PC-3 (cell line): ENCODE measurements at regions of chr4 and their contacts with region 1.

Region 1: GRCh38 chr4:72326692-72327632 is 242.1 kb downstream of the ADAMTS3 start:
- DNase-seq: peak; percentile 83
- ATAC-seq: peak; percentile 42; the same call in 1 of the 2 replicates
- H3K4me3 ChIP-seq: no peak overlapping the region
- H3K27ac ChIP-seq: no peak overlapping the region
- H3K4me1 ChIP-seq: peaks cover 18% of the 10 kb centered on the region
- H3K27me3 ChIP-seq: no peaks in the 10 kb centered on the region
- CTCF ChIP-seq: peak; percentile 89

Region 2: DNA sequence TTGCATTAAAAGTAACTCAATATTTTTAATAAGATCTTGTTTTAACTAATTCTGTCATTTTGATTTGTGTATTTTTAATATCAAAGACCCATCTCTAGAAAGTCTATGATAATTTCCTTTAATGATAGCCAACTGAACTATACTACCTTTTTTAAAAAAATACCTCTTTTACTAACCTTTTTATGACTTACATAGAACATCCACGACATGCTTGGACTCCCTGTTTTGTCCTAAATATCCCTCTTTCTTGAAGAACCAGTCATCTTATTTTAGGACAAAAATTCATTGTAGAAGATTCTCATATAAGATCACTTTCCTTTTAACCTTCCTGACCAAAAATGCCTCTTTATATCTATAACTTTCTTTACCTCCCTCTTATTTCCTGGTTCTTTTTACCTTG is 466.3 kb before region 1 on chr4:
- CTCF ChIA-PET with region 1: no interaction called
- POLR2A ChIA-PET with region 1: no interaction called
- intact Hi-C with region 1: no loop called
- DNase-seq: peak; percentile 48
- ATAC-seq: no peak
- H3K4me3 ChIP-seq: no peak overlapping the region
- H3K27ac ChIP-seq: no peak overlapping the region
- H3K4me1 ChIP-seq: no peaks in the 10 kb centered on the region
- H3K27me3 ChIP-seq: no peaks in the 10 kb centered on the region
- CTCF ChIP-seq: no peak

Region 3: GRCh38 chr4:72295966-72296557 is 30.9 kb before region 1 on chr4:
- CTCF ChIA-PET with region 1: interaction called, 3 read pairs
- POLR2A ChIA-PET with region 1: no interaction called
- intact Hi-C with region 1: loop called (anchors 1 kb)
- DNase-seq: peak; percentile 90
- ATAC-seq: peak; percentile 93
- H3K4me3 ChIP-seq: no peak overlapping the region
- H3K27ac ChIP-seq: no peak overlapping the region
- H3K4me1 ChIP-seq: no peaks in the 10 kb centered on the region
- H3K27me3 ChIP-seq: no peaks in the 10 kb centered on the region
- CTCF ChIP-seq: peak; percentile 95

Region 4: GRCh38 chr4:72418458-72418857 is 91.5 kb after region 1 on chr4:
- CTCF ChIA-PET with region 1: no interaction called
- POLR2A ChIA-PET with region 1: no interaction called
- intact Hi-C with region 1: loop called (anchors 2 kb)
- DNase-seq: peak; percentile 90
- ATAC-seq: peak; percentile 92
- H3K4me3 ChIP-seq: no peak overlapping the region
- H3K27ac ChIP-seq: no peak overlapping the region
- H3K4me1 ChIP-seq: peaks cover 9% of the 10 kb centered on the region; the same call in 1 of the 2 replicates
- H3K27me3 ChIP-seq: no peaks in the 10 kb centered on the region
- CTCF ChIP-seq: no peak

Region 5: GRCh38 chr4:72468904-72469502 is 142.0 kb after region 1 on chr4:
- CTCF ChIA-PET with region 1: no interaction called
- POLR2A ChIA-PET with region 1: no interaction called
- intact Hi-C with region 1: loop called (anchors 1 kb)
- DNase-seq: peak; percentile 83
- ATAC-seq: peak; percentile 29; the same call in 1 of the 2 replicates
- H3K4me3 ChIP-seq: no peak overlapping the region
- H3K27ac ChIP-seq: no peak overlapping the region
- H3K4me1 ChIP-seq: no peaks in the 10 kb centered on the region
- H3K27me3 ChIP-seq: no peaks in the 10 kb centered on the region
- CTCF ChIP-seq: peak; percentile 92

Region 6: DNA sequence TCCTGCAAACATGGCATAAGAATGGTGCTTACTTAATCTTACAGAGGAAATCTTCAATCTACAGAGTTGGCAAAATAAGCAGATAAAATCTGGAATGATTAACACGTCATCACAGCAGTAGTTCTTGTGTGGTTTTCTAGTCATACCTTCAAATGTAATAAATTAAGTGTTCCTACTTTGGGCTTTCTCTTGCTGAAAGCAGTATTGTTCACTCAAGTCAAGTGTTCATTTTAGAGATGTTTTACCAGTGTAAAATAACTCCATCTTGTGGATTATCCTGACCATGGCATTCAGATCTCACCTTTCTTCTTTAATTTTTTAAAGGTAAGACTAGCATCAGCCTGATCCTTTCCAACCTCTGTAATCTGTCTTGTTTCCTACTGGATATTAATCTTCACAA is 169.2 kb after region 1 on chr4:
- CTCF ChIA-PET with region 1: interaction called, 5 read pairs
- POLR2A ChIA-PET with region 1: no interaction called
- intact Hi-C with region 1: loop called (anchors 1 kb)
- DNase-seq: peak; percentile 71
- ATAC-seq: peak; percentile 87
- H3K4me3 ChIP-seq: no peak overlapping the region
- H3K27ac ChIP-seq: no peak overlapping the region
- H3K4me1 ChIP-seq: no peaks in the 10 kb centered on the region
- H3K27me3 ChIP-seq: no peaks in the 10 kb centered on the region
- CTCF ChIP-seq: peak; percentile 79

Region 7: DNA sequence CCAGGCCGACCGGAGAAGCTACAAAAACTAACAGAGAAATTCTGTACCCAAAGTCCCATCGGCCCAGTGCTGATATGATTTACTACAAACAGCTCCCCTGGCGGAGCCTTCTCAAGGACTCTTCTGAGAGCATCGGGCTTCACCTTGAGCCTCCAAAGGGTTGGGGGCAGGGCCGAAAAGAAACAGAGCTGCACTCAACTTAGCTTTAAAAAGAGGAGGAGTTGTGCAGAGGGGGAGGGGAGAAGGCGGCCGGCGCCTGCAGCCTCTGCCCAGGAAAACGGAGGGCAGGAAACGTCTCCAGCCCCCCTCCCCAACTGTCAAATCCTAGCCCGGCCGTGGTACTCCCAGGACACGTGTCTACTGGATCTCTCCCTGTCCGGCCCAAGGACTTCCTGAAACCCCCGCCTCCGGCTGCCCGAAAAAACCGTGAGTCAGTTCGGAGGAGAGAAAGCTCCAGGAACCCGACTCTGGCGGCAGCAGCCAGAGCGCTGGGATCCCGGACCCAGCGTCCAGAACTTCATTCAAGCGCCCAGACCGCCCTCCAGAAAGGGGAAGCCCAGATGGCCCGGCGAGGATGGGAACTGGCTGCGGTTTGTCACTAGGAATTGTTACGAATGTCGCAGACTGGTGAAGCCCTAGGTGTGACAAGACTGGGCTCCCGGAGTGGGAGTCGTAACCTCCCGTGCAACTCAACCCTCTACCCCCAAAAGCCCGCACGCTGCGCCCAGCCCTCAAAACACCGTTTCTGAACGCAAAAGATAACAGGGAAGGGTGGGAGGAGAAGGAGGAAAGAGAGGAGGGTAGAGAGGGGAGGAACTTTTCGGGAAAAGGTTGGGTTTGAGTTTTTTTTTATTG is 241.1 kb after region 1 on chr4:
- CTCF ChIA-PET with region 1: interaction called, 3 read pairs
- POLR2A ChIA-PET with region 1: no interaction called
- intact Hi-C with region 1: loop called (anchors 2 kb)
- DNase-seq: peak; percentile 96
- ATAC-seq: peak; percentile 76
- H3K4me3 ChIP-seq: peak overlapping the region; percentile 92
- H3K27ac ChIP-seq: peak overlapping the region; percentile 77
- H3K4me1 ChIP-seq: peaks cover 36% of the 10 kb centered on the region
- H3K27me3 ChIP-seq: no peaks in the 10 kb centered on the region
- CTCF ChIP-seq: peak; percentile 66

Region 8: DNA sequence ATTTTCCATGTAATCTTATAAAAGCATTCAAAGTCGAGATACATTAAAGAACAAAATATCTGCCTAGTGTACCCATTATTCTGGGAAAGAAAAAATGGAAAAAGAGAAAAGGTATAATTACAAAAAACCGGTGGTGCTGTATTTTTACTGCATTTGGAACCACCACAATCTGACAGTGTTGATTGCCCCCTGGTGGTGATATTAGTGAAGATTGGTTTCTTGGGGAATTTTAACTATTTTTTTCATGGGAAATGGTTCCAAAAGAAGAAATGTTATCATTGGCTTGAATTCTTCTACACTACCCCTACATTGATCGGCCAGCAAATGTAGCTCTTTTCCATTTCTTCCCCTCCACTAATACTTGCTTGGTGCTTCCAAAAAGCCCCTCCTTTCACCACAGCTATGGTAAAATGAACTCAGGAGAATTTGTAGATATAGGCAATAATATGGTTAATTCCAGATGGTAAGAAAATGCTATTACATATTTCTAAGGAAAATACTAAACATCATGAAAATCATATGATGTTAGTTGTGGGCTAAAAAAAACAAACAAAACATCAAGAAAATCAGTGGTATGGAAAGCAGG is 692.6 kb after region 1 on chr4:
- CTCF ChIA-PET with region 1: interaction called, 3 read pairs
- POLR2A ChIA-PET with region 1: no interaction called
- intact Hi-C with region 1: loop called (anchors 10 kb)
- DNase-seq: peak; percentile 78
- ATAC-seq: no peak
- H3K4me3 ChIP-seq: no peak overlapping the region
- H3K27ac ChIP-seq: no peak overlapping the region
- H3K4me1 ChIP-seq: no peaks in the 10 kb centered on the region
- H3K27me3 ChIP-seq: peaks cover 11% of the 10 kb centered on the region
- CTCF ChIP-seq: peak; percentile 95